ENCODE measurements at regions of chr3 and their contacts with region 1.

Region 1: GRCh38 chr3:185558395-185558794 is 6.0 kb upstream of the LIPH start:
- DNase-seq: peak; percentile 4

Region 2: GRCh38 chr3:185353823-185354614 is 204.4 kb before region 1 on chr3:
- intact Hi-C with region 1: loop called (anchors 5 kb)
- DNase-seq: no peak

Region 3: DNA sequence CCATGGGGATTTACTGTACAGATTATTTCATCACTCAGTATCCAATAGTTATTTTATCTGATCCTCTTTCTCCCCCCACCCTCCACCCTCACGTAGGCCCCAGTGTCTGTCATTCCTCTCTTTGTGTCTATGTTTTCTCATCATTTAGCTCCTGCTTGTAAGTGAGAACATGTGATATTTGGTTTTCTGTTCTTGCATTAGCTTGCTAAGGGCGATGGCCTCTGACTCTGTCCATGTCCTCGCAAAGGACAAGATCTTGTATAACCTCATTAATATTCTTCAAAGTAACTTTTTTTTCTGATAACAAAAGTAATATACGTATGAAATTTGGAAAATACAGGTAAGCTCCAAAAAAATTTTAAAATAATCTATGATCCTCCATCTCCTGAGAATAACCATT is 128.0 kb before region 1 on chr3:
- intact Hi-C with region 1: no loop called
- DNase-seq: no peak

Region 4: GRCh38 chr3:186166036-186166435 is 607.6 kb after region 1 on chr3:
- intact Hi-C with region 1: no loop called
- DNase-seq: no peak